Activated T-helper 1 cell treated with anti-CD3 and anti-CD28 coated beads, Interleukin-12 subunit alpha, Interleukin-12 subunit beta, Interleukin-2, Interleukin-4 antibody, amounts not matched to agents 30 ng/mL and 10 ng/mL and 1 ng/mL, durations not matched to agents 14 hours and 24 hours and 36 hours (primary cell): ENCODE measurements at regions of chr5 and their contacts with region 1.

Region 1: GRCh38 chr5:82351754-82352145 is 73.6 kb upstream of the RPS23 start:
- DNase-seq: no peak
- H3K4me3 Mint-ChIP-seq: no peak overlapping the region
- H3K27ac Mint-ChIP-seq: peak overlapping the region; percentile 42
- H3K4me1 Mint-ChIP-seq: peaks cover 71% of the 10 kb centered on the region
- H3K27me3 Mint-ChIP-seq: no peaks in the 10 kb centered on the region

Region 2: DNA sequence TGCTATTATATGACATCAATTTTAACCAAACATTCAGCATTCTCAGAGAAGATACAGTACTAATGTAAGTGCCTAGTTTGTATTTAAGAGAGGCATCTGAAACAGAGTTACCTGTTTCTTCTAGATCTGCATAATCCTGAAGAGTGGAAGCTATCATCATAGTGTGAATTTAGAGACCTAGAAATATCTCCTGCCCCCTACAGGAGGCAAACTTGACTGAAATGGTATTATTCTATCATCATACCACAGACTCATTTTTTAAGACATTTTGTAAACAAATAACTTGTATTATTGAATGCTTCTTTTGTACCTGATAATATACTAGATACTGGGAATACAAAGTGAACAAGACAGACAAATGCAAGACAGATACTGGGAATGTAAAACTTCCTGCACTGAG is 143.2 kb after region 1 on chr5:
- intact Hi-C with region 1: loop called (anchors 2 kb)
- DNase-seq: no peak
- H3K4me3 Mint-ChIP-seq: no peak overlapping the region
- H3K27ac Mint-ChIP-seq: no peak overlapping the region
- H3K4me1 Mint-ChIP-seq: peaks cover 26% of the 10 kb centered on the region
- H3K27me3 Mint-ChIP-seq: peaks cover 13% of the 10 kb centered on the region

Region 3: GRCh38 chr5:82641331-82642003 is 289.7 kb after region 1 on chr5:
- intact Hi-C with region 1: loop called (anchors 1 kb)
- DNase-seq: peak; percentile 14
- H3K4me3 Mint-ChIP-seq: no peak overlapping the region
- H3K27ac Mint-ChIP-seq: no peak overlapping the region
- H3K4me1 Mint-ChIP-seq: peaks cover 19% of the 10 kb centered on the region
- H3K27me3 Mint-ChIP-seq: no peaks in the 10 kb centered on the region

Region 4: DNA sequence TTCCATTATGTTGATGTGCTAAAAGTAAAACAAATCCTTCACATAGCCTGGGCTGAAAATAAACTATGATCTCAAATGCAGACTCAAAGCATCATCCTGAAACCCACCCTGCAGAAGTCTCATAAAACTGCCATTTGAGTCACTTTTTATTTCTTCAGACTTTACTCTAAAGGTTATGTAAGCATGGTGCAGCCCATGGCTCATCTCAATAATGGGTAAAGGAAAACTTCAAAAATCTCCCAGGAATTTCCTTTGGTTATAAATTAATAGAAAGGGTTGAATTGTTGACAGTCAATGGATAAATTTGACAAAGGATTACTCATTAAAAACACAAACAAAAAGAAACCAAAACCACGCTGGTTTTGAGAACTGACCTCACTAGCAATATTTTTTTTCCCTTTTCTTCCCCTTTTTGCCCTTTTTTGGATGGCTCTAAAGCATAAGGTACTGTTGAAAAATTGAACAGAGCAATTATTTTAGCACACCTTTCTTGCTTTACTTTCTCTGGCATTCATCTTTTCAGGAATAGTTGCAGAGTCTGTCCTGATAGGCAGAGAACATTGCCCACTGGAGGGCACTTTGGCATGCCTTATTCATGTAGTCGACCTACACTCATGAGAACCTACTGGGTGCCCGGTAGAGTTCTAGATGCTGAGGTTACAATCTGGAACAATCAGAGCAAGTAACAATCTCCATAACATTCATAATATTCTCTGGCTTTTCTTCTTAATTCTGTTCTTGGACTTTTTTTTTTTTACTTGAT is 534.1 kb after region 1 on chr5:
- intact Hi-C with region 1: loop called (anchors 10 kb)
- DNase-seq: no peak
- H3K4me3 Mint-ChIP-seq: no peak overlapping the region
- H3K27ac Mint-ChIP-seq: no peak overlapping the region
- H3K4me1 Mint-ChIP-seq: peaks cover 34% of the 10 kb centered on the region
- H3K27me3 Mint-ChIP-seq: no peaks in the 10 kb centered on the region

Region 5: DNA sequence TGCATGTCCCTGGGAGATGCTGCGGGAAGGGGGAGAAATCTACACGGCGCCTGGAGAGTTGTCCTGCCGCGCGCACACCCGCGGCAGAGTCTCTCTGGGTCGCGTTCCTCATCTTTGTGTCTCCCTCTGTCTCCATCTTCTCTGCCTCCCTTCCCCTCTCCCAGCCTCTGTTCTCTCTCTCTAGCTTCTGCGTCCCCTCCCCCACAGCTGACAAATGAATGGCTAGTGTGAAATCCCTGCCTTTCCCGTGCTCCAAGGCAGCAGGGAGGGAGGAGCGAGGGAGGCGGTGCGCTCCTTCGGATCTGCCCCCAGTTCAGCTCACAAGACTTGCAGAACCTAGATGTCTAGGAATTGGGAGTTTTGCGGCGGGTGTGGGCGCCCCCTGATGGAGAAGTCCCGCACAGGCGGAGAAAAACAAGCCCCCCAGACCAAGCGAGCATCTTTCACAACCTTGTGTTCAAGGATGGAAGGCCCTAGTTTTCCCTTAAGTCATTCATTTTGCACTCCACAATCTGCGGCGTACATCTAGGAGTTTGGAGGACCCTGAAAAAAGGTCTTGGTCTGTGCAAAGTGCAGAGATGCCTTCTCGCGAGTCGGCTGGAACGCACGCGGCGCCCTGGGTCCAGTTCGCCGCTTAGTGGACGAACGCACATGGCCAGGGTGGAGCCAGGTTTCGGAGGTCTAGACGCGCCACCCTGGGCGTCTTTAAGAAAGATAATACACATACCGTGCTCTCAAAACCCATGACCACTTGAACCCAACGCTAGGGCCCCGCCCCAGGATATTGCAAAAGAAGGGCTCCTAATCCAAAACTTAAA is 1121.8 kb after region 1 on chr5:
- intact Hi-C with region 1: loop called (anchors 1 kb)
- DNase-seq: peak; percentile 45
- H3K4me3 Mint-ChIP-seq: peak overlapping the region; percentile 86
- H3K27ac Mint-ChIP-seq: peak overlapping the region; percentile 78
- H3K4me1 Mint-ChIP-seq: peaks cover 33% of the 10 kb centered on the region
- H3K27me3 Mint-ChIP-seq: peaks cover 72% of the 10 kb centered on the region